ENCODE measurements at regions of chr19 and their contacts with region 1.

Region 1: DNA sequence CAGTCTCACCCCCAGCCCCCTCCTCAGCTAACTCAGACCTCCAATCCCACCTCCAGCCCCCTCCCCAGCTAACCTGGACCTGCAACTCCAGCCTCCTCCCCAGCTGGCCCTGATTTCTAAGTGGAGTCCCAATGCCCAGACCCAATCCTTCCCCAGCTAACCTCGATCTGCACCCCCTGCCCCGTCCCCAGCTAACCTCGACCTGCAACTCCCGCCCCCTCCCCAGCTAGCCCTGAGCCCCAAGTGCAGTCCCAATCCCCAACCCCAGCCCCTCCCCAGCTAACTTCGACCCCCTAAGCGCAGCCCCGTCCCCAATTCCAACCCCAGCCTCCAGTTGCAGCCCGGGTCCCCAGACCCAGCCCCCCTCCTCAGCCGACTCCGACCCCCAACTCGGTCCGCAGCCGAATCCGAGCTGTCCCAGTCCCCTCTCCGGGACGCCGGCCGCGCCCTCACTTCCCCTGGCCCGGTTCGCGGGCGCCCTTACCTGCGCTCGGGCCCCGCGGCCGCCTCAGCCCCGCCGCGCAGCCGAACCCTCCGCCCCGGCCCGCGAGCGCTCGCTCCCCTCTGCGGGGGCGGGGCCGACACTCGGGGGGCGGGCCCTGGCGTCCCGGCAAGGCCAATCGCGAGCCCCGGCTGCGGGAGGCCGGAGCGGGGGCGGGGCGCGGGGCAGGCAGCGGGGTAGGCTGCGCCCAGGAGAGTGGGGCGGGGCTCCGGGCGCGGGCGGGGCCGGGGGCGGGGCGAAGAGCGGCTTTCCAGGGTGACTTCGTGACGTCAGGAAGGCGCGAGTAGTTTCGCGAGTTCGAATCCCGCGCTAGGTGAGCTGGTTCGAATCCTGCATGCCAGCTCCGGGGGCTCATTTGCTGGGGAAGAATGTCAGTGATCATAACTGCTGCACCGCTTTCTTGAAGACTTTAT is at the start of gene GNG7:
- DNase-seq: peak; percentile 78
- ATAC-seq: peak; percentile 92
- H3K4me3 ChIP-seq: peak within 1 kb of the TSS; percentile 75 to 96 (median 82)
- H3K27ac ChIP-seq: no peak within 1 kb of the TSS
- H3K4me1 ChIP-seq: peaks cover 36% of the 10 kb centered on the region
- H3K27me3 ChIP-seq: no peaks in the 10 kb centered on the region; a peak in 1 of 5 replicates
- CTCF ChIP-seq: no peak
- EP300 ChIP-seq: no peak
- POLR2A ChIP-seq: peak; percentile 58 to 81
- RAD21 ChIP-seq: peak; percentile 42; the same call in 1 of the 2 replicates
- total RNA-seq, gene GNG7: 1.4 and 1.7 TPM in 2 replicates

Region 2: GRCh38 chr19:2686360-2686759 is 16.1 kb before region 1 on chr19:
- CTCF ChIA-PET with region 1: no interaction called
- POLR2A ChIA-PET with region 1: interaction called, 28 read pairs
- in situ Hi-C with region 1: no loop called
- intact Hi-C with region 1: no loop called
- DNase-seq: no peak
- ATAC-seq: no peak; the same call in 2 of the 3 replicates
- H3K4me3 ChIP-seq: peak overlapping the region in 1 of 3 experiments; percentile 61; a peak in 3 of 6 replicates
- H3K27ac ChIP-seq: peak overlapping the region; percentile 85
- H3K4me1 ChIP-seq: peaks cover 33% of the 10 kb centered on the region
- H3K27me3 ChIP-seq: no peaks in the 10 kb centered on the region
- CTCF ChIP-seq: no peak
- EP300 ChIP-seq: no peak
- POLR2A ChIP-seq: no peak
- RAD21 ChIP-seq: no peak

Region 3: DNA sequence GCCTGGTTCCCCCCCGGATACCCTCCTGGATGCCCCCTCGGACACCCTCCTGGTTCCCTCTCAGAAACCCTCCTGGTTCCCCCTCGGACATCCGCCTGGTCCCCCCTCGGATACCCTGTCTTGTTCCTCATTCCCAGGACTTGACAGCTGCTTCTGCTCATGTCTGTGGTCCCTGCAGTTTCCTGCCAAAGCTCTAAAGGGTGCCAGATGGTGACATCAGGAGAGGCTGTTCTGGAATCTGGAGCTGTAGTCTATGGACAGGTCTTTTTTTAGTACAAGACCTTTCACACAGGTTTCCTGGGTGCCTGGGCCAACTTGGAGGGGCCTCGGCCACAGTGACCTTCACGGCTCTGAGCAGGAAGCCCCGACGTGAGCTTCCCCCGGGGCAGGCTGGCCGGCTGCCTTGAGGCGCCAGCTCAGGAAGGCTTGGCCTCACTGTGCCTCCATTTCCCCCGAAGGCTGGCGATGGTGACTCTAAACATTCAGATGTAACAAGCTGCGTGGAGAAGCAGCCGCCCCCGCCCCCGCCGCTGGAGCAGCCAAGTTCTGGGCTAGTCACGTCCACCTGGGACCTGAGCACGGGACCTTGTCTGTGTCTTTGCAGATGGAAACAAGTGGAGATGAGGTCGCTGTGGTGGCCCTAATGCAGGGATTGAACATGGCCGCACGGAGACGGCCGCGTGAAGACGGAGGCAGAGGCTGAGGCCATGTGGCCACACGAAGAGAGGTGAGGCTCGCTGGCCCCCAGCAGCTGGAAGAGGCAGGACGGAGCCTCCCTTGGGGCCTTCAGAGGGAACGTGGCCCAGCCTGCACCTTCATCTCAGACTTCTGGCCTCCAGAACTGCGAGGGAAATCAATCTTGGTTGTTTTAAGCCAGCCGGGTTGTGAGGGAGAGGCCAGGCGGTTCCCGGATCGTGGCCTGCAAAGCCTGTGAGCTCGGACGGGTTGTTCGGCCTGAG is 67.9 kb after region 1 on chr19:
- CTCF ChIA-PET with region 1: no interaction called
- POLR2A ChIA-PET with region 1: no interaction called
- in situ Hi-C with region 1: no loop called
- intact Hi-C with region 1: no loop called
- DNase-seq: no peak
- ATAC-seq: no peak
- H3K4me3 ChIP-seq: no peak overlapping the region
- H3K27ac ChIP-seq: no peak overlapping the region
- H3K4me1 ChIP-seq: peaks cover 9% of the 10 kb centered on the region
- H3K27me3 ChIP-seq: no peaks in the 10 kb centered on the region
- CTCF ChIP-seq: no peak
- EP300 ChIP-seq: no peak
- POLR2A ChIP-seq: no peak
- RAD21 ChIP-seq: no peak

Region 4: GRCh38 chr19:3304871-3305423 is 602.5 kb after region 1 on chr19:
- CTCF ChIA-PET with region 1: no interaction called
- POLR2A ChIA-PET with region 1: no interaction called
- in situ Hi-C with region 1: no loop called
- intact Hi-C with region 1: loop called (anchors 5 kb)
- DNase-seq: peak; percentile 58
- ATAC-seq: peak; percentile 47
- H3K4me3 ChIP-seq: 0 out of 6 replicates have a peak overlapping the region, but pooled peaks of 1 of the 3 experiments have one; percentile 6
- H3K27ac ChIP-seq: no peak overlapping the region
- H3K4me1 ChIP-seq: peaks cover 22% of the 10 kb centered on the region
- H3K27me3 ChIP-seq: no peaks in the 10 kb centered on the region; a peak in 1 of 5 replicates
- CTCF ChIP-seq: peak; percentile 83
- EP300 ChIP-seq: no peak
- POLR2A ChIP-seq: no peak
- RAD21 ChIP-seq: peak; percentile 43; the same call in 1 of the 2 replicates

Measured in HepG2 (cell line).